ENCODE measurements at regions of chr1 and their contacts with region 1.

Region 1: DNA sequence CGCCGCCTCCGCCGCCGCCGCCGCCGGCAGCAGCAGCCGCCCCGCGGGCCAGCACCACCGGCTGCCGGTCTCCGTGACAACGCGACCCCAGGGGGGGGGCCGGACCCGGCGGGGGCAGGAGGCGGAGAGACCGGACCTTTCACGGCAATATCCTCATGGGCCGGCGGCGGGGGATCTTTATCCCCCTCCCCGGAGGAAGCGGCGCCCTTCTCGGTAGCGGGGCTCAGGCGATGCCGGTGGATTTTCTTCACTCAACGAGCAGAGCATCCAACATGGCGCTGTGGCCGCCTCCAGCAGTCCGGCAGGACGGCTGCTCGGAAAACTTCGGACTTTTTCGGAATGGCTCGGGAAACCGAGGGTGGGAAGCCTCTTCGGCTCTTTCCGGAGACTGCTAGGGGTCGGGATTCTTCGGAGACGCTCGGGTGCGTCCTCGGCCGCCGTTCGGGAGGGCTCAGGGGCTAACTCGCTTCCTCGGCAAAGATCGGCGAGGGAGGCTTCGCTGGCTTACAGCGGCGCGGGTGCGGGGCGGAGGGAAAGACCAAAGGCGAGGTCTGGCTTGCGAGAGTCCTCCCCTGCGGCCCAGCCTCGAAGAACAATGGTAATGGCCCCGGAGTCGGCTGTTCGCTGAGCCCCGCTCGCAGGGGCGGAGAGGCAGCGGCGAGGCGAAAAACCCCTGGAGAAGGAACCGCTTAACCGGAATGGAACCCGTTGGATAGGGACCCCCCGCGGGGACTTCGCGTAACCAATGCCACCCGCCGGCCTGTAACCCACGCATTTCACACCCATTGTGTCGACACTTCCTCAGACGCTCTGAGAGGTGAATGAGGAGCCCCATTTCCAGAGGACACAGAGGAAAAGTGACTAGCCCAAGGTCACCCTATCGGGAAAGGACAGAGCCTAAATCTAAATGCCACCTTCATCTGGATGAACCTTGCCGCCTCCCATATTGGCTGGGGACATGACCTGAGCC is at the start of gene EIF4G3:
- DNase-seq: peak; percentile 100
- ATAC-seq: peak; percentile 97
- H3K4me3 Mint-ChIP-seq: peak within 1 kb of the TSS; percentile 81
- H3K27ac Mint-ChIP-seq: peak within 1 kb of the TSS; percentile 90
- H3K4me1 Mint-ChIP-seq: peaks cover 30% of the 10 kb centered on the region
- H3K27me3 Mint-ChIP-seq: no peaks in the 10 kb centered on the region
- total RNA-seq, gene EIF4G3: 56.7 to 64.3 TPM

Region 2: GRCh38 chr1:21189906-21190500 is 13.1 kb after region 1 on chr1:
- CTCF ChIA-PET with region 1: interaction called, 14 read pairs
- DNase-seq: no peak
- ATAC-seq: no peak
- H3K4me3 Mint-ChIP-seq: no peak overlapping the region
- H3K27ac Mint-ChIP-seq: no peak overlapping the region
- H3K4me1 Mint-ChIP-seq: peaks cover 4% of the 10 kb centered on the region
- H3K27me3 Mint-ChIP-seq: peaks cover 29% of the 10 kb centered on the region

Region 3: GRCh38 chr1:21255278-21255942 is 78.5 kb after region 1 on chr1:
- CTCF ChIA-PET with region 1: no interaction called
- DNase-seq: peak; percentile 87
- ATAC-seq: peak; percentile 79
- H3K4me3 Mint-ChIP-seq: no peak overlapping the region
- H3K27ac Mint-ChIP-seq: no peak overlapping the region
- H3K4me1 Mint-ChIP-seq: peaks cover 27% of the 10 kb centered on the region
- H3K27me3 Mint-ChIP-seq: no peaks in the 10 kb centered on the region

Measured in activated CD8-positive, alpha-beta memory T cell treated with anti-CD3 and anti-CD28 coated beads, Interleukin-2, amount 10 ng/mL, durations not matched to agents 7 days and 5 days (primary cell).